ENCODE measurements at regions of chr7 and their contacts with region 1.

Region 1: DNA sequence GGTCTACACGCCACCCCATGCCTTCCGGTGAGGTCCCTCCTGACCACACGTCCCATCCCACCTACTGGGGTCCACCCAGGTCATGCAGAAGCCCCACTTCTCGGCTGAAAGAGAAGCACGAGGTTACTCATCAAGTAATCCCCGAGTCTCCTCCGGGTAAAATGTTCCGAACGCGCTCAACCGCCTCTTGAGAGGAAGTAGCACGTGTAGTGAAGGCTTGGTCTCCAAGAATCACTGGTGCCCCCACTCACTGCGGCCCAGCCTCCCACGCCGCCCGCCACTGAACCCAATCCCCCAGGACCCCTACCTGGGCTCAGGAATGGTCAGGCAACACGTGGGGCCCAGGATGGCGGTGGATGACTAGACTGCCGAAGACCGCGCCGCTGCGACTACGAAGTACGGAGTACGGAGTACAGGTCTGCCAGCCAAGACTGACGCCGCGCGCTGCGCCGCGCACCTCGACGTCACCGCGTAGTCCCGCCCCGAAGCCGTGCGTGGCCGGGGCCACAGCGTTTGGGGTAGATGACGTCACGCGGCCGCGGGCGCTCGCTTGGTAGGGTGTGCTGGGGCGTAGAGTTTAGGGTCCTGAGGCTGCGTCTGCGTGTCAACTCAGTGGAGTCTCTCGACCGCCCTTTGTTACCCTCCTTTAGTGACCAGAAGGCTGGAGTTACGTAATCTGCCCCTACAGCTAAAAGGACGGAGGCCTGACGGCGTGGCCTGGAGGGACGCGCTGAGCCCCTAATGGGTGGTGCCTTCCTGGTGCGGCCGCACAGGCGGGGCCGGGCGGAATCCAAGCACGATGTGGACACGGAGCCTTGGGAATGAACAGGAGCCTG is 7.6 kb upstream of the MYO1G start:
- DNase-seq: peak; percentile 83 to 94
- H3K4me3 ChIP-seq: peak overlapping the region; percentile 89 to 97 (median 94)
- H3K27ac ChIP-seq: peak overlapping the region; percentile 94
- H3K4me1 ChIP-seq: peaks cover 0 to 7% (median 5%) of the 10 kb centered on the region in 4 experiments; a peak in 3 of 7 replicates
- H3K27me3 ChIP-seq: no peaks in the 10 kb centered on the region
- CTCF ChIP-seq: no peak
- EP300 ChIP-seq: peak in 1 of 2 experiments; percentile 40; a peak in 1 of 3 replicates
- POLR2A ChIP-seq: peak; percentile 98 to 99
- RAD21 ChIP-seq: no peak

Region 2: GRCh38 chr7:44891372-44891771 is 95.1 kb before region 1 on chr7:
- CTCF ChIA-PET with region 1: no interaction called
- POLR2A ChIA-PET with region 1: no interaction called
- DNase-seq: no peak
- H3K4me3 ChIP-seq: no peak overlapping the region
- H3K27ac ChIP-seq: no peak overlapping the region
- H3K4me1 ChIP-seq: no peaks in the 10 kb centered on the region
- H3K27me3 ChIP-seq: no peaks in the 10 kb centered on the region; a peak in 2 of 7 replicates
- CTCF ChIP-seq: no peak
- EP300 ChIP-seq: no peak
- POLR2A ChIP-seq: no peak
- RAD21 ChIP-seq: no peak

Region 3: GRCh38 chr7:44999245-45000095 is 13.0 kb after region 1 on chr7:
- CTCF ChIA-PET with region 1: interaction called, 4 read pairs
- POLR2A ChIA-PET with region 1: interaction called, 193 read pairs
- DNase-seq: peak; percentile 96 to 97
- H3K4me3 ChIP-seq: peak overlapping the region; percentile 66 to 98 (median 73)
- H3K27ac ChIP-seq: peak overlapping the region; percentile 97
- H3K4me1 ChIP-seq: peaks cover 0 to 6% (median 3%) of the 10 kb centered on the region in 4 experiments; a peak in 3 of 7 replicates
- H3K27me3 ChIP-seq: no peaks in the 10 kb centered on the region
- CTCF ChIP-seq: no peak
- EP300 ChIP-seq: no peak
- POLR2A ChIP-seq: peak; percentile 56 to 85
- RAD21 ChIP-seq: no peak

Region 4: DNA sequence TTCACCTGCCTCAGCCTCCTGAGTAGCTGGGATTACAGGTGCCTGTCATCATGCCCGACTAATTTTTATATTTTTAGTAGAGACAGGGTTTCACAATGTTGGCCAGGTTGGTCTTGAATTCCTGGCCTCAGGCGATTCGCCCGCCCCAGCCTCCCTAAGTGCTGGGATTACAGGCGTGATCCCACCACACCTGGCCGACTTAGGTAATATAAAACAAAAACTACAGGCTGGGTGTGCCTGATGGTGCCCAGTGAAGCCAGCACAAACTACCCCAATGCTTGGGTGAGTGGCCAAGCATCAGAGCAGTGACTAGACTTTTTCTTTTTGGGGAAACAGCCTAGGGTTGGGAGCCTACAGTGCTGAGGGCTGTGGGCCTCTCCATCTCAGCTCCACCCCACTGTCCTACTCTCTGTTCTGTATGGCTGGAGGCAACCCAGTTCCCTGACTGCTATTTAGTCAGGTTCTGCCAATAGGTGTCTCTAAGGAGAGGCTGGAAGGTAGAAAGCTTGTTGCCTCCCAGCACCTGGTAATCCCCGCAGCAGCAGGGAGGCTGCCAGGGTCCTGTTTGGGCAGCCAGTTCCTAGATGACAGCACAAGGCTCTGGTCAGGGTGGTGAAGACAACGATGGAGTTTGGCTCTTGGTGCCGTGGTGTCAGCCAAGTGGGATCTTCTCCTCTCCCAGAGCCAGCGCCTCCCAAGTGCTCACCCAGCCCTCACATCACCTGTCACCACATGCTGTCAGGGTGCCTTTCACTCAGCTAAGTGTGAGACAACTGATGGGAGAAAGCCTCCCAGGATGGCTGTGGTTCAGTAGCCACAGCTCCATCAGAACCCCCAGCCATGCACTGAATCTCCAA is 112.8 kb after region 1 on chr7:
- CTCF ChIA-PET with region 1: no interaction called
- POLR2A ChIA-PET with region 1: interaction called, 18 read pairs
- DNase-seq: no peak
- H3K4me3 ChIP-seq: no peak overlapping the region
- H3K27ac ChIP-seq: no peak overlapping the region
- H3K4me1 ChIP-seq: no peaks in the 10 kb centered on the region
- H3K27me3 ChIP-seq: no peaks in the 10 kb centered on the region
- CTCF ChIP-seq: no peak
- EP300 ChIP-seq: no peak
- POLR2A ChIP-seq: peak in 1 of 2 experiments; percentile 42; a peak in 1 of 3 replicates
- RAD21 ChIP-seq: peak in 1 of 2 experiments; percentile 8; a peak in 1 of 4 replicates

Region 5: DNA sequence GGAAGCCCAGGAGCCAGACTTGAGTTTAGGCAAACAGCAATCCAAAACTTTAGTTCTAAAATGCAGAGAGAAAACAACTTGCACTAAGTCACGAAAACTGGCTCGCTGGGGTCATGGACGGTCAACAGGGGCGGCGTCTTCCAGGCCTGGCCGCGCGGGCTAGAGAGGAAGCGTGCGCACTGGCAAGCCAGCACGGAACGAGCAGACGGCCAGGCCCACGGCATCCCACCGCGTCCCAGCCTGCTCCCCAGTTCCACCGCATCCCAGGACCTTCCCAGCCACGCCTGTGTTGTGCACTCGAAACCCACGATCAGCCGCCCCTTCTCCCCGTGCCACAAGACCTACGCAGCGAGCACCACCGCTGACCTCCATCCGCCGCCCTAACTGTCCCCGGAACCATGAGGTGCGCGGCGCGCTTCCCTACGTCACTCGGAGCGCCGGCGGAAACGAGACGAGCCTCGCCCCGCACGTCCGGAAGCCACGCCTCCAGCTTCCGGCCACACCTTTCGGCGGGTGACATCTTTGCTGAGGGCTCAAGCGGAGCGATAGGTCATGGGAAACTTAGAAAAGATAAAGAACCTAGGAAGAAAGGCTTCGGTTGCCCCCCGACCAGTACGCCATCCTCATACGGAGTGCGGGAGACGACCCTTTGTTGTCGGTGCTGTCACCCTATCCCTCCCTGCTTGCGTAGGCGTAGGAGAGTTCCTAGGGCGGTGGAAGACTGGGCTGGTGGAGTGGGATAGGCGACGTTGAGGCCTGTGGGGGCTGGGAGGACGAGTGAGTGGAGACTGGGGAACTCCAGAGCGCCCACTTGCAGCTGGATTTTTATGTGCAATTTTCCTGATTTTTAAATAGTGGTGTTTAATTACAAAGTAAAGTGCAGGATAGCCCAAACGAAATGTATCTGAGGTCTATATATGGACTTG is 125.1 kb after region 1 on chr7 and contains the start of gene TBRG4:
- CTCF ChIA-PET with region 1: no interaction called
- POLR2A ChIA-PET with region 1: interaction called, 27 read pairs
- DNase-seq: peak; percentile 79 to 94
- H3K4me3 ChIP-seq: peak within 1 kb of the TSS; percentile 68 to 93 (median 85)
- H3K27ac ChIP-seq: peak within 1 kb of the TSS; percentile 94
- H3K4me1 ChIP-seq: peaks cover 0 to 3% (median under 1%) of the 10 kb centered on the region in 4 experiments; a peak in 2 of 7 replicates
- H3K27me3 ChIP-seq: peaks cover 0 to 4% (median 1%) of the 10 kb centered on the region in 4 experiments; a peak in 1 of 7 replicates
- CTCF ChIP-seq: peak in 1 of 3 experiments; percentile 7; a peak in 1 of 4 replicates
- EP300 ChIP-seq: no peak
- POLR2A ChIP-seq: peak; percentile 95 to 99
- RAD21 ChIP-seq: peak; percentile 1 to 15; a peak in 1 of 4 replicates
- total RNA-seq, gene TBRG4: 137 and 146 TPM in 2 replicates